Activated naive CD4-positive, alpha-beta T cell treated with anti-CD3 and anti-CD28 coated beads for 36 hours (primary cell): ENCODE measurements at regions of chr5 and their contacts with region 1.

Region 1: DNA sequence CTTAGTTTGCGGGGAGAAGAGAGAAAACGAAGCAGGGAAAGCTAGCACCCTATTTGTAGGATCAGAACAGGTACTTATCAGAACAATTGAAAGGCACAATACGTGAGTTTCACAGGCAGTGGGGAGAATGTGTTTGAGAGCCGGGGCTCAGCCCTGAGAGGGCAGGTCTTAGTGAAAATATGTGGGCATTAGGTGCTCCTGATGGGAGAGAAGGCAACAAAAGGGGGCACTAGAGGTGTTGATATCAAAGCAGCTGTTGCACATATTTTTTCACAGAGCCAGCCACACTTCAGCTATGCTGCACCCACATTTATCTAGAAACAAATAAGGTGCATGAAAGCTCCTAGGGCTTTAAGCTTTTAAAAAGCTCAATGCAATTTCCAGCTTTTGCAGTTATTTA is 99.7 kb upstream of the MAN2A1 start:
- DNase-seq: peak; percentile 11
- H3K4me3 Mint-ChIP-seq: no peak overlapping the region
- H3K27ac Mint-ChIP-seq: no peak overlapping the region
- H3K4me1 Mint-ChIP-seq: peaks cover 13% of the 10 kb centered on the region
- H3K27me3 Mint-ChIP-seq: peaks cover 1% of the 10 kb centered on the region

Region 2: GRCh38 chr5:109121225-109121624 is 468.8 kb before region 1 on chr5:
- CTCF ChIA-PET with region 1: no interaction called
- intact Hi-C with region 1: no loop called
- DNase-seq: no peak
- H3K4me3 Mint-ChIP-seq: no peak overlapping the region
- H3K27ac Mint-ChIP-seq: no peak overlapping the region
- H3K4me1 Mint-ChIP-seq: no peaks in the 10 kb centered on the region
- H3K27me3 Mint-ChIP-seq: no peaks in the 10 kb centered on the region

Region 3: DNA sequence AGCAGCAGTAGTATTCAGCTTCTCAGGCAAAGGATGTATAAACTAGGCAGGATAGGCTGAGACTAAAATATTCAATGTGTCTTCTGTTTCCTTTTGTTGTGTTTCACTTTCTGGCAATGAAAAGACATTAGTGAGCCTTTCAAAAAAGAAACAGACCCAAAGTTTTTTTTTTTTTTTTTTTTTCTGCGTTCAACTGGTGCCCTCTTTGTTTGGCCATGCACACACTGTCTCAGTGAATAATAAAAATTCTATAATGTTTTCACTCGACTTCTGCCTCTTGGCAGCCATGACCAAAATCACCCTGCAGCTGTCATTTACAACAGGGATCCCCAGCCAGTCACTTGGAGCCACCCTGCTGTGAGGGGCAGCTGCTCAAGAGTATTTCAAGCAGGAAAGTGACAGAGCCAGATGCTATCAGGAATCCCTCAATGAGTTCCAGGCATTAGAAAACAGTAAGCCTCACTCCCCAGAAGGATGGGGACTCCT is 55.8 kb after region 1 on chr5:
- CTCF ChIA-PET with region 1: no interaction called
- intact Hi-C with region 1: no loop called
- DNase-seq: no peak
- H3K4me3 Mint-ChIP-seq: no peak overlapping the region
- H3K27ac Mint-ChIP-seq: no peak overlapping the region
- H3K4me1 Mint-ChIP-seq: no peaks in the 10 kb centered on the region
- H3K27me3 Mint-ChIP-seq: no peaks in the 10 kb centered on the region

Region 4: GRCh38 chr5:110333384-110333783 is 743.4 kb after region 1 on chr5:
- CTCF ChIA-PET with region 1: no interaction called
- intact Hi-C with region 1: loop called (anchors 10 kb)
- DNase-seq: peak; percentile 58
- H3K4me3 Mint-ChIP-seq: no peak overlapping the region
- H3K27ac Mint-ChIP-seq: no peak overlapping the region
- H3K4me1 Mint-ChIP-seq: no peaks in the 10 kb centered on the region
- H3K27me3 Mint-ChIP-seq: no peaks in the 10 kb centered on the region

Region 5: GRCh38 chr5:110625376-110625999 is 1035.5 kb after region 1 on chr5:
- CTCF ChIA-PET with region 1: no interaction called
- intact Hi-C with region 1: loop called (anchors 1 kb)
- DNase-seq: no peak
- H3K4me3 Mint-ChIP-seq: no peak overlapping the region
- H3K27ac Mint-ChIP-seq: no peak overlapping the region
- H3K4me1 Mint-ChIP-seq: no peaks in the 10 kb centered on the region
- H3K27me3 Mint-ChIP-seq: peaks cover 3% of the 10 kb centered on the region